PC-9 (cell line): ENCODE measurements at regions of chr2 and their contacts with region 1.

Region 1: GRCh38 chr2:98869940-98870263 is 66.1 kb downstream of the CRACDL start:
- DNase-seq: peak; percentile 90 to 97
- H3K4me3 ChIP-seq: peak overlapping the region; percentile 63
- H3K27ac ChIP-seq: peak overlapping the region; percentile 95
- H3K4me1 ChIP-seq: peaks cover 66% of the 10 kb centered on the region
- H3K27me3 ChIP-seq: no peaks in the 10 kb centered on the region
- CTCF ChIP-seq: no peak

Region 2: GRCh38 chr2:97688062-97688827 is 1181.7 kb before region 1 on chr2:
- CTCF ChIA-PET with region 1: no interaction called
- POLR2A ChIA-PET with region 1: interaction called, 10 read pairs
- intact Hi-C with region 1: no loop called
- DNase-seq: peak in 1 of 2 experiments; percentile 89
- H3K4me3 ChIP-seq: no peak overlapping the region; the same call in 1 of the 2 replicates
- H3K27ac ChIP-seq: peak overlapping the region; percentile 80
- H3K4me1 ChIP-seq: peaks cover 33% of the 10 kb centered on the region
- H3K27me3 ChIP-seq: no peaks in the 10 kb centered on the region
- CTCF ChIP-seq: no peak

Region 3: DNA sequence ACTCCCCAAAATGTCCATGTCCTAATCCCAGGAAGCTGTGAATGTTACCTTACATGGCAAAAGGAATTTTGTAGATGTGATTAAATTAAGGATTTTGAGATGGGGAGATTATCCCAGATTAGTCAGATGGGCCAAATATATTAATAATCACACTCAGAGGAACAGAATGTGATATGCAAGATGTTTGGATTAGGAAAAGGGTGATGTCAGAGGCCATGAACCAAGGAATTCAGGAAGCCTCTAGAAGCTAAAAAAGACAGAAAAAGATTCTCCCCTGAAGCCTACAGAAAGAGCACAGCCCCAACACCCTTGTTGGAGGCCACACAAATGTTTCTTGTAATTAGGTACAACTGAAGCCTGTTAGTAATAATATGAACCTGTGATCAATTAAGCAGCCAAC is 887.3 kb before region 1 on chr2:
- CTCF ChIA-PET with region 1: no interaction called
- POLR2A ChIA-PET with region 1: no interaction called
- intact Hi-C with region 1: no loop called
- DNase-seq: no peak
- H3K4me3 ChIP-seq: no peak overlapping the region
- H3K27ac ChIP-seq: no peak overlapping the region
- H3K4me1 ChIP-seq: no peaks in the 10 kb centered on the region
- H3K27me3 ChIP-seq: no peaks in the 10 kb centered on the region
- CTCF ChIP-seq: no peak

Region 4: GRCh38 chr2:98649135-98649991 is 220.5 kb before region 1 on chr2:
- CTCF ChIA-PET with region 1: no interaction called
- POLR2A ChIA-PET with region 1: no interaction called
- intact Hi-C with region 1: loop called (anchors 1 kb)
- DNase-seq: peak; percentile 75 to 78
- H3K4me3 ChIP-seq: no peak overlapping the region
- H3K27ac ChIP-seq: no peak overlapping the region
- H3K4me1 ChIP-seq: no peaks in the 10 kb centered on the region
- H3K27me3 ChIP-seq: no peaks in the 10 kb centered on the region
- CTCF ChIP-seq: peak; percentile 100

Region 5: GRCh38 chr2:98757904-98758421 is 111.9 kb before region 1 on chr2:
- CTCF ChIA-PET with region 1: no interaction called
- POLR2A ChIA-PET with region 1: interaction called, 3 read pairs
- intact Hi-C with region 1: loop called (anchors 1 kb)
- DNase-seq: peak; percentile 86 to 100
- H3K4me3 ChIP-seq: no peak overlapping the region
- H3K27ac ChIP-seq: peak overlapping the region; percentile 73
- H3K4me1 ChIP-seq: peaks cover 38% of the 10 kb centered on the region
- H3K27me3 ChIP-seq: no peaks in the 10 kb centered on the region
- CTCF ChIP-seq: no peak

Region 6: GRCh38 chr2:98835831-98836385 is 34.0 kb before region 1 on chr2:
- CTCF ChIA-PET with region 1: no interaction called
- POLR2A ChIA-PET with region 1: no interaction called
- intact Hi-C with region 1: loop called (anchors 2 kb)
- DNase-seq: no peak
- H3K4me3 ChIP-seq: no peak overlapping the region
- H3K27ac ChIP-seq: no peak overlapping the region
- H3K4me1 ChIP-seq: peaks cover 25% of the 10 kb centered on the region
- H3K27me3 ChIP-seq: no peaks in the 10 kb centered on the region
- CTCF ChIP-seq: no peak

Region 7: DNA sequence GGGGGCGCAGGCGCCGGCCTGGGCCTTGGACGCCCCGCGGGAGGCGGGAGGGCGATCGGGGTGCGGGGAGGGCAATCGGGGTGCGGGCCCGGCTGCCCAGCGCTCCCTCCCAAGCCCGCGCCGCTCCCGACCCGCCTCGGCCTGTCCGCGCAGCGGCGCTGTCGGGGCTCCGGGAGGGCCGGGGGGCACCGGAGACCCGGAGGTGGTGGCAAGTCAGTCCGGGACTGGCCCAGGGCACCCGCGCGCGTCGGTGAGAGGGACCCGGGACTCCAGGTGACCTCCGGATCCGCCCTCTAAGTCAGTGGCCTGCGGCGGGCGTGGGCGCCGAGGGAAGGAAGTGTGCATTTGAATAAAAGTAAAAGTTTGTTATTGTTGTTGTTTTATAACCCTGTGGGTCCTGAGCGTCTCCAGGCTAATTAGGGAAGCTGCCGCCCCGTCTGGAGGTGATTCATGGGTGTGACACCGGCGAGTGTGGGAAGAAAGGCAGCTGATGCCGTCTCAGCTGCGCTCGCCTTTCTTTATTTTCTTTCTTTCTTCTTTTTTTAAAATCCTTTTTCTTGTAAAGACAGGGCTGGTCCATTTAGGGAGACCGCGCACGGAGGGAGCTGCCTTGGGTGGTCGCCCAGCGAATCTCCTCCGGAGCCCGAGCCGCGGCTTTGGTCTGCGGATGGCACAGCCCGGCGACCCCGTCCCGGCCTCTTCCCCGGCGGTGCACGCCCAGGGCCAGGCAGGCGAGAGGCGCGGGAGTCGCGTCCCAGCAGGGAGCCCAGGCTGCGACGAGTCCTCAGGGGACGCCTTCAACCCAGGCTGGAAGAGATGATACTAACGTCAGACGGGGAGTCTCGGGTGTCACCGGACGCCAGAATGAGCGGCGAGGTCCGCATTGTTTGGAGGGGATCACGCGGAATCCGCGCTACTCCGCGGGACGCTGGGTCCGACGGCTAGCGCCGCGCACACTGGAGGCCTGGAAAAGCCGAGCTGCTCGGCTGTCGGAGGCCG is 66.8 kb after region 1 on chr2:
- CTCF ChIA-PET with region 1: interaction called, 10 read pairs
- POLR2A ChIA-PET with region 1: no interaction called
- intact Hi-C with region 1: loop called (anchors 2 kb)
- DNase-seq: no peak
- H3K4me3 ChIP-seq: peak overlapping the region; percentile 54; the same call in 1 of the 2 replicates
- H3K27ac ChIP-seq: no peak overlapping the region
- H3K4me1 ChIP-seq: no peaks in the 10 kb centered on the region
- H3K27me3 ChIP-seq: peaks cover 47% of the 10 kb centered on the region
- CTCF ChIP-seq: no peak

Region 8: DNA sequence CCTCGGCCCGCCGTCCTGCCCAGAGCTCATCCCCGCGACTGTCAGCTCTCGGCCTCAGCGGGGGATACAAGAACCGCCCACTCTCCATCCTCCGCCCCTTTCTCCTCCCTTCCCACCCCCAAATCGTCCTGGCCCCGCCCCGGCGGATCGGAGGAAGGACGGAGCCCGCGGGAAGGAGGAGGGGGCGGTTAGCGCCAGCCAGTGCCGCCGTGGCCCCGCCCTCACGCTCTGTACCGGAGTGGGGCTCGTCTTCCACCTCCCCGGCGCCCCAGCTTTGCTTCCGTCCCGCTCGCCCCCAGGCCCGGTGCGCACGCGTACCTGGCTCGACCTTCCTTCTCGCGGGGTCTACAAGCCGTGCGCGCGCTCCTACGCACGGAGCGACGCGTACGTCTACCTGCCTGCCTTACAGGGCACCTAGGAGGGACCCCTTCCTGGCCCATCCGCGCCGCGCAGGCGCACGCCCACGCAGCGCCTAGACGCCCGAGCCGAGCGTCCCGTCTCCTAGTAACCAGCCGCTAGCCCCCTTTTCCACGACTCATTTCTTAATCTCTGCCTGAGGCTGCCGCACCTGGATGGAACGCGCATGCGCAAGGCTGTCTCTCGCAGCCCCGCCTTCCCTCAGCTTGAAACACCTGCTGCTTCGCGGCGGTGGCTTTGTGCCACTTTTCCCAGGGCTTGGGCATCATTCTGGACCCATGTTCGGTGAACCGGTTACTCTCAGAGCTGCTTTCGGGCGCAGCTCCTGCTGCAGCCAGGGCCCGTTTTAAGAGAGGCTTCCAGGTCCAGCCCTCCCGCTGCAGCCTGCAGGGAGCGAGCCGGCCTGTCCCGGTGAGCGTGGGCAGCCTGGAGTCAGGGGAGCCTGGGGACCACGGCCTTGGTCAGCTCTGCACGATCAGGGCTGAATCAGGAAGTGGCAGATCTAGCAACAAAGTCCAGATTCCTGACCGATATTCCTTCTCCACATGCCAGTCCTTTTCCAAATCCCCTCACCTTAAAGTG is 271.5 kb after region 1 on chr2 and contains the start of gene C2orf15:
- CTCF ChIA-PET with region 1: no interaction called
- POLR2A ChIA-PET with region 1: interaction called, 5 read pairs
- intact Hi-C with region 1: loop called (anchors 2 kb)
- DNase-seq: peak; percentile 94 to 99
- H3K4me3 ChIP-seq: peak within 1 kb of the TSS; percentile 86
- H3K27ac ChIP-seq: peak within 1 kb of the TSS; percentile 64
- H3K4me1 ChIP-seq: peaks cover 24% of the 10 kb centered on the region
- H3K27me3 ChIP-seq: no peaks in the 10 kb centered on the region
- CTCF ChIP-seq: no peak
- total RNA-seq, gene C2orf15: 16.9 and 18.0 TPM in 2 replicates